ENCODE measurements at regions of chr17 and their contacts with region 1.

Region 1: GRCh38 chr17:39863918-39864746 is at the start of gene IKZF3:
- DNase-seq: peak; percentile 61 to 80
- ATAC-seq: peak; percentile 62
- H3K4me3 ChIP-seq: no peak within 1 kb of the TSS
- H3K27ac ChIP-seq: no peak within 1 kb of the TSS
- H3K4me1 ChIP-seq: no peaks in the 10 kb centered on the region
- H3K27me3 ChIP-seq: no peaks in the 10 kb centered on the region
- total RNA-seq, gene IKZF3: 1.7 to 2.8 TPM

Region 2: GRCh38 chr17:38799378-38800236 is 1064.5 kb before region 1 on chr17 and contains the start of gene PIP4K2B:
- intact Hi-C with region 1: no loop called
- DNase-seq: peak; percentile 98
- ATAC-seq: peak; percentile 97
- H3K4me3 ChIP-seq: peak within 1 kb of the TSS; percentile 63 to 68
- H3K27ac ChIP-seq: peak within 1 kb of the TSS; percentile 92 to 93
- H3K4me1 ChIP-seq: peaks cover 0 to 7% of the 10 kb centered on the region in 2 donors
- H3K27me3 ChIP-seq: no peaks in the 10 kb centered on the region
- total RNA-seq, gene PIP4K2B: 32.4 to 48.4 TPM

Region 3: GRCh38 chr17:39963829-39964228 is 99.7 kb after region 1 on chr17:
- intact Hi-C with region 1: loop called in 1 of 2 experiments (anchors 10 kb)
- DNase-seq: no peak
- ATAC-seq: no peak
- H3K4me3 ChIP-seq: no peak overlapping the region
- H3K27ac ChIP-seq: no peak overlapping the region
- H3K4me1 ChIP-seq: no peaks in the 10 kb centered on the region
- H3K27me3 ChIP-seq: no peaks in the 10 kb centered on the region

Measured in aorta (tissue), 5 donors.